ENCODE measurements at regions of chr17 and their contacts with region 1.

Region 1: GRCh38 chr17:74296548-74296936 is 22.5 kb downstream of the DNAI2 start:
- DNase-seq: no peak
- ATAC-seq: peak; percentile 79
- H3K4me3 ChIP-seq: no peak overlapping the region
- H3K27ac ChIP-seq: no peak overlapping the region
- H3K4me1 ChIP-seq: peaks cover 4% of the 10 kb centered on the region; the same call in 1 of the 2 replicates
- H3K27me3 ChIP-seq: no peaks in the 10 kb centered on the region
- CTCF ChIP-seq: peak; percentile 82

Region 2: GRCh38 chr17:73820686-73821448 is 475.7 kb before region 1 on chr17:
- CTCF ChIA-PET with region 1: no interaction called
- POLR2A ChIA-PET with region 1: no interaction called
- in situ Hi-C with region 1: no loop called
- intact Hi-C with region 1: no loop called
- DNase-seq: no peak
- ATAC-seq: no peak
- H3K4me3 ChIP-seq: no peak overlapping the region
- H3K27ac ChIP-seq: no peak overlapping the region
- H3K4me1 ChIP-seq: no peaks in the 10 kb centered on the region
- H3K27me3 ChIP-seq: no peaks in the 10 kb centered on the region; the same call in 1 of the 2 replicates
- CTCF ChIP-seq: no peak; the same call in 1 of the 2 replicates

Region 3: GRCh38 chr17:74147056-74147807 is 149.3 kb before region 1 on chr17:
- CTCF ChIA-PET with region 1: no interaction called
- POLR2A ChIA-PET with region 1: no interaction called
- in situ Hi-C with region 1: no loop called
- intact Hi-C with region 1: no loop called
- DNase-seq: no peak
- ATAC-seq: no peak
- H3K4me3 ChIP-seq: no peak overlapping the region
- H3K27ac ChIP-seq: no peak overlapping the region
- H3K4me1 ChIP-seq: no peaks in the 10 kb centered on the region
- H3K27me3 ChIP-seq: no peaks in the 10 kb centered on the region; the same call in 1 of the 2 replicates
- CTCF ChIP-seq: no peak

Region 4: GRCh38 chr17:74212913-74213791 is 83.4 kb before region 1 on chr17 and contains the start of gene TTYH2:
- CTCF ChIA-PET with region 1: interaction called, 8 read pairs
- POLR2A ChIA-PET with region 1: no interaction called
- in situ Hi-C with region 1: no loop called
- intact Hi-C with region 1: loop called (anchors 1 kb)
- DNase-seq: no peak
- ATAC-seq: peak; percentile 75
- H3K4me3 ChIP-seq: peak within 1 kb of the TSS; percentile 49 to 89
- H3K27ac ChIP-seq: peak within 1 kb of the TSS; percentile 78
- H3K4me1 ChIP-seq: peaks cover 45% of the 10 kb centered on the region
- H3K27me3 ChIP-seq: no peaks in the 10 kb centered on the region
- CTCF ChIP-seq: no peak
- total RNA-seq, gene TTYH2: 8.3 TPM

Region 5: GRCh38 chr17:74417178-74418045 is 120.9 kb after region 1 on chr17:
- CTCF ChIA-PET with region 1: no interaction called
- POLR2A ChIA-PET with region 1: no interaction called
- in situ Hi-C with region 1: no loop called
- intact Hi-C with region 1: no loop called
- DNase-seq: no peak
- ATAC-seq: peak; percentile 81
- H3K4me3 ChIP-seq: no peak overlapping the region
- H3K27ac ChIP-seq: no peak overlapping the region
- H3K4me1 ChIP-seq: no peaks in the 10 kb centered on the region
- H3K27me3 ChIP-seq: no peaks in the 10 kb centered on the region
- CTCF ChIP-seq: no peak

Region 6: DNA sequence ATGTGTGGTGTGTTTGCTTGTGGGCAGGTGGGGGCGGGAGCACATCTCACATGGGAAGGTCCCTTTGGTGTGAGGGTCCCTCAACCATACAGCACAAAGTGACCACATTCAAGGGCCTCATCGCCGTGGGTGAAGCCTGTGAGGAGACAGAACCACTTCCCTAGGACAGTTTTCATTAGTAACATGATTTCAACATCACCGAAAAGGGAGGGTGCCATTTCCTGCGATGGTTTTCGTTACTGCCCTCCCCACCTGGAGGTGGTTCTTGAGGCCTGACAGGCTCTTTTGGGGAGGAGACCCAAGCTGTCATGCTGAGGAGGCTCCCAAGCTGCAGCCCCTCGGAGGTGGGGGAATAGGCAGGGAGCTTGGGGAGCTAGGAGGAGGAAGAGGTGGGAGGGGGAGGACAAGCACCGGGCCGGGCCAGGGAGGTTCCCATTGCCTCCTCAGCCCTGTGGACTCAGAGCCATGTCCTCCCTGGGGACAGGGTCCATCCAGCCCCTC is 225.2 kb after region 1 on chr17:
- CTCF ChIA-PET with region 1: no interaction called
- POLR2A ChIA-PET with region 1: no interaction called
- in situ Hi-C with region 1: no loop called
- intact Hi-C with region 1: no loop called
- DNase-seq: no peak
- ATAC-seq: no peak
- H3K4me3 ChIP-seq: no peak overlapping the region
- H3K27ac ChIP-seq: no peak overlapping the region
- H3K4me1 ChIP-seq: no peaks in the 10 kb centered on the region
- H3K27me3 ChIP-seq: peaks cover 4% of the 10 kb centered on the region
- CTCF ChIP-seq: no peak

Measured in Panc1 (cell line).